ACHN (cell line): ENCODE measurements at regions of chr12 and their contacts with region 1.

Region 1: DNA sequence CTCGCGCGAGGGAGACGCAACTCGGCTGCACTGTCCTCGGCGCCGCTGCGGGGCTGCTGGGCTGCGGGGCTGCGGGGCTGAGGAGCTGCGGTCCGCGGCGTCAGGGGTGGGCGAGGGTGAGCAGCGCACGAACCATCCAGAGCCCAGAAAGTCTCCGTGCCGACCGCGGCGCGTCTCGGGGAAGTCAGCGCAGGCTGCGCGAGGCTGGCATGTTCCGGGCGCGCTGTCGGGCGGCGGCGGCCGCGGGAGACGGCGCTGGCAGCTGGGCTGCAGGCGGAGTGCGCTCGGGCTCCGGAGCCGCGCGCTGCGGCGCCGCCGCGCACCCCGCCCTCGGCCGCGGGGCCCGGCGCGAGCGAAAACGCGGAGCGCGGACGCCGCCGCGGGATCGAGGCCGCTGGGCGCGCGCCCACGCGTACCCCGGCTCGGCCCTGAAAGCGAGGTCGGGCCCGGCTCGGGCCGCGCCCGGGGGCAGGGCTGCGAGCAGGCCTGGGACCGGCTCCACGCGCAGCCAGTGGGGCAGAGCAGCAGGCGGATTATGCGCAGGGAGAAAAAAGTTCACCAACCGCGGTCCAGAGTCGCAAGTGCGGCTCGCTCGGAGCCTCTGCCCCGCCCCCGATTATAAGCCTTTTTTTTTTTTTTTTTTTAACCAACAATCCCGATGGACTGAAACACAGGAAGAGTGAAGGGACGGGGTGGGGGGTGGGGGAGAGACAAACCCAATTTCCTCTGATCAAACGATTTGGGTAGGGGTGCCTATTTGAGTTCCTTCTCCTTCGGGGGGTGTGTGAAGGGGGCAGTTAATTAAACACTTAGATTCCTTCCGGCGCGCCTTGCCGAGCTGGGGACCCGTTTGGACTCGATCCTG is at the start of gene PRICKLE1:
- DNase-seq: peak; percentile 81

Region 2: GRCh38 chr12:42961395-42961794 is 371.7 kb after region 1 on chr12:
- in situ Hi-C with region 1: loop called (anchors 25 kb)
- DNase-seq: peak; percentile 100